CD4-positive, alpha-beta memory T cell (primary cell): ENCODE measurements at regions of chr7 and their contacts with region 1.

Region 1: GRCh38 chr7:128946923-128947830 is 9.4 kb downstream of the IRF5 start:
- DNase-seq: no peak
- H3K4me3 ChIP-seq: no peak overlapping the region
- H3K4me3 Mint-ChIP-seq: peak overlapping the region in 1 of 8 donors; percentile 54
- H3K27ac ChIP-seq: no peak overlapping the region
- H3K27ac Mint-ChIP-seq: no peak overlapping the region
- H3K4me1 ChIP-seq: no peaks in the 10 kb centered on the region
- H3K4me1 Mint-ChIP-seq: peaks cover 0 to 2% (median 1%) of the 10 kb centered on the region in 4 donors
- H3K27me3 ChIP-seq: no peaks in the 10 kb centered on the region
- H3K27me3 Mint-ChIP-seq: no peaks in the 10 kb centered on the region

Region 2: DNA sequence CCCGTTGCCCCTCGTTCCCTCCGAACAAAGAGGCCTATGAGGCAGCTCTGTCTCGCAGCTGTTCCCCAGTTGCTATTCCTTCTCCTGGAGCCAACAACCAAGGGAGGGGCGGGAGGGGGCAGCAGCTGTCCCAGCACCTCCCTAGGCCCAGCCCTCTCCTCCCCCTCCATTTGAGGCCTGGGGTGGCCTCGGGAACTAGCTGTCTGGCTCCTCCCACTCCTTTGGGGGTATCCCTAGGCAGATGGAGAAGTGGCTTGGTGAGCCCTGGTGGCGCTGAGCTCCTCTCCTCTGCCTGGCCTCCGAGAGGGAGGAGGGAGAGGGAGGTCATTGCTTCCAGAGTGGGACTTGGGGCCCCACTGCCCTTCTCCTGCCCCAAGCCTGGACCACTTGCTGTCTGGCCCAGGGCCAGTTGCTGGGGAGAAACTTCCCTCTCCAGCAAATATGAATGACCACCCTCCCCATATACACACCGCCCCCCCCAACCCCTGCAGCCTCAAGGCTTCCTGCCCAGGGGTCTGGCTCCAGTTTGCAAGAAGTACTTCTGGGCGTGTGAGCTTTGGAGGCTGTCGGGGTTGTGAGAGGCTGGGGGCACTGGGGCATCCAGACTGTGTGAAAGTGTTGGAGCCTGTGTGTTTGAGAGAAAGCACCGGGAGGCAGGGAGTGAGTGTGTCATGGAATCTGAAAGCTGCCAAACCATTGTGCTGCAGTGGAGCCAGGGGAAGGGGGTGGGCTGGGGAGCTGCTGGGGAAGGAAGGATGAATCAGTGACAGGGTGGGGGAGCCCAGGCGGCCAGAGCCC is 113.8 kb before region 1 on chr7:
- CTCF ChIA-PET with region 1: no interaction called
- POLR2A ChIA-PET with region 1: no interaction called
- intact Hi-C with region 1: no loop called
- DNase-seq: no peak
- H3K4me3 ChIP-seq: no peak overlapping the region
- H3K4me3 Mint-ChIP-seq: no peak overlapping the region
- H3K27ac ChIP-seq: no peak overlapping the region
- H3K27ac Mint-ChIP-seq: no peak overlapping the region
- H3K4me1 ChIP-seq: peaks cover 19% of the 10 kb centered on the region
- H3K4me1 Mint-ChIP-seq: peaks cover 7 to 14% (median 9%) of the 10 kb centered on the region in 4 donors
- H3K27me3 ChIP-seq: peaks cover 13% of the 10 kb centered on the region
- H3K27me3 Mint-ChIP-seq: peaks cover 14 to 20% of the 10 kb centered on the region in 2 donors

Region 3: GRCh38 chr7:128933180-128933891 is 13.8 kb before region 1 on chr7:
- CTCF ChIA-PET with region 1: interaction called, 3 read pairs
- POLR2A ChIA-PET with region 1: interaction called, 10 read pairs
- intact Hi-C with region 1: no loop called
- DNase-seq: peak; percentile 45 to 64 (median 58)
- H3K4me3 ChIP-seq: peak overlapping the region in 1 of 2 donors; percentile 26
- H3K4me3 Mint-ChIP-seq: peak overlapping the region; percentile 57 to 95 (median 88)
- H3K27ac ChIP-seq: peak overlapping the region; percentile 35
- H3K27ac Mint-ChIP-seq: peak overlapping the region; percentile 63 to 94 (median 89)
- H3K4me1 ChIP-seq: peaks cover 25% of the 10 kb centered on the region
- H3K4me1 Mint-ChIP-seq: peaks cover 15 to 41% (median 23%) of the 10 kb centered on the region in 4 donors
- H3K27me3 ChIP-seq: no peaks in the 10 kb centered on the region
- H3K27me3 Mint-ChIP-seq: peaks cover 0 to 3% of the 10 kb centered on the region in 2 donors

Region 4: DNA sequence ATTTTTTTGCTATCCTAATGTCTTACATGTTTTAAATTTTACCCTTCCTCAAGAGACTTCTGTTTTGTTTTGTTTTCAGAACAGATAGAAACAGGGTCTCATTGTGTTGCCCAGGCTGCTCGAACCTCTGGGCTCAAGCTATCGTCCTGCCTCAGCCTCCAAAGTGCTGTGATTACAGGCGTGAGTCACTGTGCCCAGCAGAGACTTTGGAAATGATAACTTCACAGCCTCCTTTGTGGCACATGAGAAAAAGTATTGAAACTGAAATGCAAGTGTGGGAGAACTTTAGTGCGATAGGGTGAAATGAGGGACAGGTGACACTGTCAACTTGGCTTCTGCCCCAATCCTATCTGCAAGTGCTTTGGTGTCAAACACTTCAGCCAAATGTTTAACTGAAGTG is 12.1 kb after region 1 on chr7:
- CTCF ChIA-PET with region 1: interaction called, 14 read pairs
- POLR2A ChIA-PET with region 1: interaction called, 3 read pairs
- intact Hi-C with region 1: no loop called
- DNase-seq: no peak
- H3K4me3 ChIP-seq: no peak overlapping the region
- H3K4me3 Mint-ChIP-seq: no peak overlapping the region
- H3K27ac ChIP-seq: no peak overlapping the region
- H3K27ac Mint-ChIP-seq: peak overlapping the region in 5 of 7 donors; percentile 21 to 60 (median 23)
- H3K4me1 ChIP-seq: peaks cover 5% of the 10 kb centered on the region
- H3K4me1 Mint-ChIP-seq: peaks cover 0 to 5% (median 2%) of the 10 kb centered on the region in 4 donors
- H3K27me3 ChIP-seq: no peaks in the 10 kb centered on the region
- H3K27me3 Mint-ChIP-seq: no peaks in the 10 kb centered on the region